MCF 10A (cell line): ENCODE measurements at regions of chr19 and their contacts with region 1.

Region 1: DNA sequence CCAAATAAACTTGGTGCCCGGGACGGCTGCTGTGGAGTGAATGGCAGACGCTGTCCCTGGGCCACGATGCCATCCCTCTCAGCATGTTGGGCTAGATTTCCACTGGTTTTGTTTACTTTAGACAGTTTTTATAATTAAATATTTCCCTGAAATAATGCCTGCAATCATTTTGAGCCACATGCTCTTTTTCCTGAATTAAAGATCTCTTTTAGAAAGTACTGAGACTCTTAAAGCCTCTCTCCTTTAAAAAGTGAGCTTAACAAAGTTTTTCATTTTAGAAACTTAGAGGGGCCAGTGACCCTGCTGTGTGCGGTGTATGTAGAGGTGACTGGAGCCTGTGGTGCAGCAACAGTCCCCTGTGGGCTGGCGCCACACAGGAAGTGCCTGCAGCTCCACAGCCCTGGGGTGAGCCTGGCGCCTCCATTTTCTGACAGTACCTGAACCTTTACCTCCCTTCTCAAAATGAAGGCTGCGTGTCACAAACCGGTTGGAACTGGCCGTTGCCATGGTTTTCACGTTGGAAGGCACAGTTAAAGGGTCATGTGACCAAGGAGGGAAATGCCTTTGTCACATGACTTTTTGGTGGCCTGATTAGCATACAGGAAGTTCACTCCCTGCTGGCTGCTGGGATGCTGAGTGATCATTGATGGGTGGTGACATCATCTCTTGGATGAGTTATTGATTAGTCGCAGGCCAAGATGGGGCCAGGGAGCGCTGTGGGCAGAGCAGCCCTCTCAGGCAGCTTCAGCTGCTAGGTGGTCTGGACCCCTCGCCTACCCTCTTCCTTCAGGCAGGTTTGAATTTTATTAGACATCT is 26.3 kb downstream of the TSSK6 start:
- DNase-seq: peak; percentile 52
- H3K4me3 Mint-ChIP-seq: peak overlapping the region; percentile 28
- H3K27ac Mint-ChIP-seq: peak overlapping the region; percentile 75
- H3K4me1 Mint-ChIP-seq: peaks cover 12% of the 10 kb centered on the region
- H3K27me3 Mint-ChIP-seq: no peaks in the 10 kb centered on the region
- CTCF ChIP-seq: no peak

Region 2: GRCh38 chr19:19354932-19355331 is 134.2 kb before region 1 on chr19:
- CTCF ChIA-PET with region 1: interaction called, 176 read pairs
- POLR2A ChIA-PET with region 1: interaction called, 3 read pairs
- intact Hi-C with region 1: no loop called
- DNase-seq: no peak
- H3K4me3 Mint-ChIP-seq: no peak overlapping the region
- H3K27ac Mint-ChIP-seq: no peak overlapping the region
- H3K4me1 Mint-ChIP-seq: no peaks in the 10 kb centered on the region
- H3K27me3 Mint-ChIP-seq: no peaks in the 10 kb centered on the region
- CTCF ChIP-seq: no peak

Region 3: GRCh38 chr19:19366612-19367396 is 122.3 kb before region 1 on chr19:
- CTCF ChIA-PET with region 1: interaction called, 176 read pairs
- POLR2A ChIA-PET with region 1: interaction called, 8 read pairs
- intact Hi-C with region 1: loop called (anchors 1 kb)
- DNase-seq: peak; percentile 86
- H3K4me3 Mint-ChIP-seq: no peak overlapping the region
- H3K27ac Mint-ChIP-seq: peak overlapping the region; percentile 51
- H3K4me1 Mint-ChIP-seq: peaks cover 13% of the 10 kb centered on the region
- H3K27me3 Mint-ChIP-seq: no peaks in the 10 kb centered on the region
- CTCF ChIP-seq: peak; percentile 85

Region 4: GRCh38 chr19:19385108-19385899 is 103.8 kb before region 1 on chr19:
- CTCF ChIA-PET with region 1: interaction called, 28 read pairs
- POLR2A ChIA-PET with region 1: interaction called, 4 read pairs
- intact Hi-C with region 1: loop called (anchors 5 kb)
- DNase-seq: peak; percentile 100
- H3K4me3 Mint-ChIP-seq: peak overlapping the region; percentile 95
- H3K27ac Mint-ChIP-seq: peak overlapping the region; percentile 98
- H3K4me1 Mint-ChIP-seq: peaks cover 30% of the 10 kb centered on the region
- H3K27me3 Mint-ChIP-seq: no peaks in the 10 kb centered on the region
- CTCF ChIP-seq: no peak

Region 5: DNA sequence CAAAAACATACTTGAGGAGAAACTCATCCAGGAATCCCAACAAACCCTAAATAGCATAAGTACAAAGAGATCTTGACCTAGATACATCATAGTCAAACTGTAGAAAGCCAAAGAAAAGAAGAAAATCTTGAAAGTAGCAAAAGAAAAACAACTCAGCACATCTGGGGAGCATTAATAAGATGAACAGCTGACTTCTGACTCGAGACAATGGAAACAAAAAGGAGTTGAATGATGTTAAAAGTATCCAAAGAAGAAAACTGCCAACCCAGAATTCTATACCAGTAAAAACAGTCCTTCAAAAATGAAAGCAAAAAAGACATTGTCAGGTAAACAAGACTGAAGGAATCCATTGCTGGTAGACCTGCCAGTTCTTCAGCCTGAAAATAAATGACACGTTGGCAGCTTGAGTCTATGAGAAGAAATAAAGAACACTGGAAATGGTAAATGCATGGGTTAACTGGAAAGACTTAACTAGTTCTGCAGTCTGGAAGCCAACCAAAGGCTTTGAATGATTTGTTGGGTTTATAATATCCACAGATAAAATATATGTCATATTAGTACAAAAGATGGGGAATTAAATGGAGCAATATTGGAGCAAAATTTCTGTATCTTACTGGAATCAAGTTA is 20.5 kb before region 1 on chr19:
- CTCF ChIA-PET with region 1: interaction called, 12 read pairs
- POLR2A ChIA-PET with region 1: interaction called, 3 read pairs
- intact Hi-C with region 1: no loop called
- DNase-seq: no peak
- H3K4me3 Mint-ChIP-seq: no peak overlapping the region
- H3K27ac Mint-ChIP-seq: no peak overlapping the region
- H3K4me1 Mint-ChIP-seq: peaks cover 6% of the 10 kb centered on the region
- H3K27me3 Mint-ChIP-seq: no peaks in the 10 kb centered on the region
- CTCF ChIP-seq: no peak

Region 6: GRCh38 chr19:19510430-19510829 is 21.3 kb after region 1 on chr19:
- CTCF ChIA-PET with region 1: interaction called, 32 read pairs
- POLR2A ChIA-PET with region 1: interaction called, 7 read pairs
- intact Hi-C with region 1: no loop called
- DNase-seq: no peak
- H3K4me3 Mint-ChIP-seq: no peak overlapping the region
- H3K27ac Mint-ChIP-seq: peak overlapping the region; percentile 63
- H3K4me1 Mint-ChIP-seq: peaks cover 6% of the 10 kb centered on the region
- H3K27me3 Mint-ChIP-seq: no peaks in the 10 kb centered on the region
- CTCF ChIP-seq: no peak

Region 7: DNA sequence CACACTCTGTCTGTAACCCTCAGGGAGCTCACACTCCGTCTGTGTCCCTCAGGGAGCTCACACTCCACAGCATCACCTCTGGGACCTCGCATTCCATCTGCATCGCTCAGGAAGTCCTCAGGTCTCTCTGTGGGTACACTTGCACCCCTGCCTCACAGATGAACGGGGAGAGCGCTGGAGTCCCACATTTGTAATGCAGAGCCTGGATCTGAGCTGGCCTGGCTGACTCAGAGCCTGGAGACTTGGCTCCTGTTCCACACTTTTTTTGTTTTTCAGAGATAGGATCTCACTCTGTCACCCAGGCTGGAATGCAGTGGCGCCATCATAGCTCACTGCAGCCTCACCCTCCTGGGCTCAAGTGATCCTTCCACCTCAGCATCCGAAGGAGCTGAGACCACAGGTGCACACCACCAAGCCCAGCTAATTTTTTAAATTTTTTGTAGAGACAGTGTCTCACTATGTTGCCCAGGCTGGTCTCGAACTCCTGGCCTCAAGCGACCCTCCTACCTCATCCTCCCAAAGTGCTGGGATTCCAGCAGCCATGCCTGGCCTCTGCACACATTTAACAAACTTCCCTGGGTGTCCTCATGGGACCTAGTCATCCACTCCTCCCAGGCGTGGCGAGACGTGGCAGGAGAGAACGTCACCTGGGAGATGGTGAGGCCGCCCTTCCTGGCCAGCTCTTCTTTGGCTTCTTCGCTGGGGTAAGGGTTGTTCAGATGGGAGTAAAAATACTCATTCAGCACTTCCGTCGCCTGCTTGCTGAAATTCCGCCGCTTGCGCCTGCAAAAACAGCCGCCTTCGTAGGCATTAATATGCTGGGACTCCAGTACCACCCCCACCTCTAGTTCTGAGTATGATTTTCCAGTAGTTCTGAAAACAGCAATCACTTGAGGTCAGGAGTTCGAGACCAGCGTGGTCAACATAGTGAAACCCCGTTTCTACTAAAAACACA is 80.0 kb after region 1 on chr19:
- CTCF ChIA-PET with region 1: no interaction called
- POLR2A ChIA-PET with region 1: no interaction called
- intact Hi-C with region 1: no loop called
- DNase-seq: peak; percentile 33
- H3K4me3 Mint-ChIP-seq: no peak overlapping the region
- H3K27ac Mint-ChIP-seq: no peak overlapping the region
- H3K4me1 Mint-ChIP-seq: no peaks in the 10 kb centered on the region
- H3K27me3 Mint-ChIP-seq: no peaks in the 10 kb centered on the region
- CTCF ChIP-seq: no peak